Astrocyte of the cerebellum (primary cell): ENCODE measurements at regions of chr12 and their contacts with region 1.

Region 1: DNA sequence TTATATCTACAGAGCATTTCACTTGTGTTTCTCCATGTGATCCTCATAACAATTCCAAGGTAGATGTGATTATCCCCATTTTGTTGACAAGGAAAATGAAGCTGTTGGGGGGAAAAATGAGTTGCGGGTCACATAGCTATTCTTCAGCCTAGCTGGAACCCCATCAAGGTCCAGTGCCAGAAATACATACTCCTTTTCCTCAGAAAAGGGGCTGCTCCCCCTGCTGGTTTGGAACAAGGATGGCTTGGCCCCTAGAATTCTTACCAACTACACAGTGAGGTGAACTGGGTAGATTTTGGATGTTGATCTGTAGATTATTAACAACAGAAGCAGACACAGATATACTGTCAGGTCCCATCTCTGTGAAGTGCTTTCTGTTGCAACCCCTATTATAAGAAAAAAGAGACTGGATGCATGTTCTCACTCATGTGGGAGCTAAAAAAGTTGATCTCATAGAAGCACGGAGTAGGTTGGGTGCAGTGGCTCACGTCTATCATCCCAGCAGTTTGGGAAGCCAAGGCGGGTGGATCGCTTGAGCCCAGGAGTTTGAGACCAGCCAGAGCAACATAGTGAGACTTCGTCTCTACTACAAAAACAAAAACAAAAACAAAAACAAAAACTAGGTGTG is 8.9 kb downstream of the IKZF4 start:
- DNase-seq: peak; percentile 43
- H3K4me3 ChIP-seq: no peak overlapping the region
- CTCF ChIP-seq: peak; percentile 83

Region 2: DNA sequence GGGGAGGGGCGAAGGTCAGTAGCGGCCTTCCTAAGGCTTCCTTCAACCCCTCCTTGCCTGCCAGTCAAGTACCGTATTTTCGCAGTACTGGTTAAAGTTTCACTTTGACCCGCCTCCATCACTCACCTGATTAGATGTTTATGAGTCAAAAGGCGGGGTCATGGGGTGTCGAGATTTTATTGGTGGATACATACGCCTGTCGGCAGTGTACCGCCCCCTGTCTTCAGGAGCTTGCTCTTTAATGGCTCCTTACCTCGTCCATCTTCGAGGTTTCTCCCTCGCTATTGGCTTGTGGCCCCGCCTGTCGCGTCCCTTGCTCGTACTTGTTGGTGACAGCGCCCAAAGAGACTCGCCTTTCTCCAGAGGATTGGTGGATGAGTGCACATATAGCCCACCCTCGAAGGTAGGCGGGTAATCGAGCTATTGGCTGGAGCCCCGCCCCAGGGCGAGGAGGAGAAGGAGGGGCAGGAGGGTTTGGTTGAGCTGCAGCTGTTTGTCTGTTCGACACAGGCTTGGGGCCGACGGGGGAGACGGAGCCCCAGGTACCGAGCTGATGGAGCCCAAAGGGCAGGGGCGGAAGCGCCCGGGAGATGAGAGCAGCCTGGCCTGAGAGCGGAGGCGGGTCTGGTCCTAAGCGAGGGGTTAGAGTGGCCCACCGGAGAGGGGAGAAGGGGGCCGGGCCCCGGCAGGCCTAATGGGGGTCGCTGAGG is 56.0 kb before region 1 on chr12 and contains the start of gene RAB5B:
- in situ Hi-C with region 1: loop called (anchors 10 kb)
- DNase-seq: peak; percentile 100
- H3K4me3 ChIP-seq: peak within 1 kb of the TSS; percentile 95
- CTCF ChIP-seq: no peak

Region 3: DNA sequence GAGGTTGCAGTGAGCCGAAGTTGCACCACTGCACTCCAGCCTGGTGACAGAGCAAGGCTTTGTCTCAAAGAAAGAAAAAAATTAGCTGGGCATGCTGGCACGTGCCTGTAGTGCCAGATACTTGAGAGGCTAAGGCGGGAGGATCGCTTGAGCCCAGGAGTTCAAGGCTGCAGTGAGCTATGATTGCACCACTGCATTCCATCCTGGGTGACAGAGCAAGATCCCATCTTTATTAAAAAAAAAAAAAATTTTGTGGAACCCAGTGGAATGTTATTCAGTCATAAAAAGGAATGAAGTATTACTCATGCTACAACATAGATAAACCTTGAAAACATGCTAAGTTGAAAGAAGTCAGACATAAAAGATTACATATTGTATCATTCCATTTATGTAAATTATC is 41.9 kb after region 1 on chr12:
- in situ Hi-C with region 1: no loop called
- DNase-seq: no peak
- H3K4me3 ChIP-seq: no peak overlapping the region
- CTCF ChIP-seq: no peak